ENCODE measurements at regions of chr13 and their contacts with region 1.

Region 1: DNA sequence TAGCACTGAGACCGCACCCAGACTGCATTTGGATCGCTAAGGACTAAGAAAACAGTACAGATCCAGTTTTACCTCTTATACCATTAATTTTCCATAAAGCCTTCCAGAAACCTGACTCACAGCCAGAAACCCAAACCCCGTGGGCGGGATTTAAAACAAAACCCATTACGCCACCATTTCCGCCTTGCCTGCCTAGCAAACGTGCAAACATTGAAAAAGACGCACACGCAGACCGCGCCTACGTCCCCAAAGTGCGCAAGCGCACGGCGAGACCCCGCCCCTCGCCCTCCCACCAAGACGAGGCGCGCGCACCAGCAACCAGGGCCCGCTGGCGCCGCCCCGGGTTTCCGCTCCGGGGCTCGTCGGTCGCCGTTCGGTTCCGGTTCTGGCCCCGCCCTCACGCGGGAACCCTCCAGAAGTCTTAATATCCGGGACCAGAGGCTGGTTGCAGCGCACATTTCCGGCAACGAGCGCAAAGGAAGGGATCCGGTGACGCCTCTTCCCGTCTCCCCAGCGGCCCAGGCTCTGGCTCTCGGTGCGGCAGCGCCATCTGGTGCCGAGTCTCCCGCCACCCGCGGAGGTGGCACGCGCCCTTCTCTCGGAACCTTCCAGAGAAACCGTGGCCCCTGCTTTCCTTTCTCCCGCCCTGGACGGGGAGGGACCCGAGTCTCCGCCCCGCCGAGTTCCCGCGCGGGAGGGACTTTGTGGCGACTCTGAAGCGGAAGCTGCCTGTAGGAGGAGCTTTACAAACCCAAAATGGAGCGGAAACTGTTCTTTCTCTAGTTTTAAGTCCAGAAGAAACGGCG is 256.9 kb upstream of the STARD13 start:
- DNase-seq: peak; percentile 97
- ATAC-seq: peak; percentile 85
- H3K4me3 ChIP-seq: peak overlapping the region; percentile 71
- H3K27ac ChIP-seq: peak overlapping the region; percentile 97
- H3K4me1 ChIP-seq: peaks cover 41% of the 10 kb centered on the region
- H3K27me3 ChIP-seq: no peaks in the 10 kb centered on the region
- CTCF ChIP-seq: peak; percentile 84

Region 2: GRCh38 chr13:32650705-32651311 is 891.7 kb before region 1 on chr13:
- CTCF ChIA-PET with region 1: no interaction called
- POLR2A ChIA-PET with region 1: no interaction called
- intact Hi-C with region 1: loop called (anchors 5 kb)
- DNase-seq: peak; percentile 75
- ATAC-seq: peak; percentile 86
- H3K4me3 ChIP-seq: no peak overlapping the region
- H3K27ac ChIP-seq: no peak overlapping the region
- H3K4me1 ChIP-seq: no peaks in the 10 kb centered on the region
- H3K27me3 ChIP-seq: no peaks in the 10 kb centered on the region
- CTCF ChIP-seq: peak; percentile 87

Region 3: DNA sequence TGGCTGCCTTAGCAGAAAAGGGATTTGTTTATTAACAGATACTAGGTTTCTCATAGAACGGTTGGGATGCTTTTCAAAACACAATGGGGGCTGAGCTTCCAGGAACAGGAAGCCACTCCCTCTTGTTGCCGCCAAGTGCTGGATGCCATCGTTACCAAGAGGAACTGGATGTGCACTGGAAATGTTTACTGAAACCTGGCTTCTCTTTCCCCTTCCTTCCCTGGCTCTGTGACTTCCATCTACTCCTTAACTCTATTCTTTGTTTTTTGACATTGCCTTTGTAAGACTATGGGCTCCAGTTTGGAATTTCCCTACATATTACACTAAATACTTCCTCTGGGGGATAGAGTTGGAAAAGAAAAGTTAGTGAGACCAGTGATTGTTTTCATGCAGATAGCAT is 538.0 kb before region 1 on chr13:
- CTCF ChIA-PET with region 1: no interaction called
- POLR2A ChIA-PET with region 1: no interaction called
- intact Hi-C with region 1: no loop called
- DNase-seq: no peak
- ATAC-seq: no peak; the same call in 1 of the 2 replicates
- H3K4me3 ChIP-seq: no peak overlapping the region
- H3K27ac ChIP-seq: no peak overlapping the region
- H3K4me1 ChIP-seq: no peaks in the 10 kb centered on the region
- H3K27me3 ChIP-seq: no peaks in the 10 kb centered on the region
- CTCF ChIP-seq: no peak

Region 4: GRCh38 chr13:33228648-33229445 is 313.6 kb before region 1 on chr13:
- CTCF ChIA-PET with region 1: interaction called, 3 read pairs
- POLR2A ChIA-PET with region 1: interaction called, 4 read pairs
- intact Hi-C with region 1: loop called (anchors 1 kb)
- DNase-seq: peak; percentile 57
- ATAC-seq: 0 out of 2 replicates have a peak, but pooled peaks have one; percentile 18
- H3K4me3 ChIP-seq: no peak overlapping the region
- H3K27ac ChIP-seq: peak overlapping the region; percentile 94
- H3K4me1 ChIP-seq: peaks cover 39% of the 10 kb centered on the region
- H3K27me3 ChIP-seq: no peaks in the 10 kb centered on the region
- CTCF ChIP-seq: peak; percentile 90

Region 5: DNA sequence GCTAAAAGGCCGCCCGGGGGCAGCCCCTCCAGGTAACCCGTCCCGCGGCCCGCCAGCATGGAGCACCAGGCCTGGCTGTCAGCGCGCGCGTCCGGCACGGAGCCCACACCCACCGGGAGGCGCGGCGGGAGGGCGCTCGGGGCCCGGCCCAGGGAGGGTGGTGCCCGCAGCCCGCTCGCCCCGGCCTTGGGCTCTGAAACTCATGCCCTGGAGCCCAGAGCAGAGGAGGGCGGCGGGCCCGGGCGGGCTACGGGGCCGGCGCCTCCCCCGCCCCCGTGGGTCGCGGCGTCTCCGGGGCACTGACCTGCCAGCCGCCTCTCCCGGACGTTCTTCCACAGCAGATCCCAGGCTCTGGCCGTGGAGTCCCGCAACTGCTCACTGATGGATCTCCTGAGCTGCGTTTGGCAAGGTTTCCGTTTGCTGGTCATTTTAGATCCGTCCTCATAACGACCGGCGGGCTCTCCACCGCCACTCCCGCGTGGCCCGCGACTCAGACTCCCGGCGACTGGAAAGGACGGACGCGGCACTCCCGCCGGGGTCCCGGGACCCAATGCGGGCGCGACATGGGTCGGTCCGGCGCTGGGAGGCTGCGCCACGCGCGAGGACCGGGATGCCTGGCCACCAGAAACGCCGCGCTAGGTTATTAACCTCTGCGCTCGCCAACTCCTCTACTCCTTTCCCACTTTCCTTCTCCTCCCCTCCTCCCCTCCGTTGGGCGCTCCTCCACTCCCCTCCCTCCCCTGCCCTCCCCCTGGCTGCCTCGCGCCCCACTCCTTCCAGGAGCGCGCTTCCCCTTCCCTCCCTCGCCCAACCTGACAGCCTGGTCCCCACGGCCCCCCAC is 192.3 kb before region 1 on chr13:
- CTCF ChIA-PET with region 1: no interaction called
- POLR2A ChIA-PET with region 1: no interaction called
- intact Hi-C with region 1: loop called (anchors 1 kb)
- DNase-seq: peak; percentile 37
- ATAC-seq: peak; percentile 62
- H3K4me3 ChIP-seq: peak overlapping the region; percentile 96
- H3K27ac ChIP-seq: peak overlapping the region; percentile 26
- H3K4me1 ChIP-seq: peaks cover 31% of the 10 kb centered on the region
- H3K27me3 ChIP-seq: no peaks in the 10 kb centered on the region
- CTCF ChIP-seq: no peak

Region 6: DNA sequence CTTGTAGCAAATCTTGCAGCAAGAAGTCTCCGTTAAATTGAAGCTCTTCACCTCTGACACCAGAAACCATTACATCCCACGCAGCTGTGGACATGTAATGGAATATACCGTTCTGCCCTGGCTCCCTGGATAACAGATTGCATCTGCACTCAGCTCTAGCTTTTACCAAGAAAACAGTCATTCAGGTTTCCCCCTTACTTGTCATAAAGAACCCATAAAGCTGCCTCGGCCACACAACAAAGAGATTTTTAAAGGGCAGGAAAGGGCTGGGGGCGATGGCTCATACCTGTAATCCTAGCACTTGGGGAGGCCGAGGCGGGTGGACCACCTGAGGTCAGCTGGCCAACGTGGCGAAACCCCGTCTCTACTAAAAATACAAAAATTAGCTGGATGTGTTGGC is 147.9 kb after region 1 on chr13:
- CTCF ChIA-PET with region 1: no interaction called
- POLR2A ChIA-PET with region 1: no interaction called
- intact Hi-C with region 1: loop called (anchors 10 kb)
- DNase-seq: no peak
- ATAC-seq: no peak
- H3K4me3 ChIP-seq: no peak overlapping the region
- H3K27ac ChIP-seq: no peak overlapping the region
- H3K4me1 ChIP-seq: no peaks in the 10 kb centered on the region
- H3K27me3 ChIP-seq: no peaks in the 10 kb centered on the region
- CTCF ChIP-seq: no peak

Measured in PC-3 (cell line).